Activated T-helper 1 cell treated with anti-CD3 and anti-CD28 coated beads, Interleukin-12 subunit alpha, Interleukin-12 subunit beta, Interleukin-2, Interleukin-4 antibody, amounts not matched to agents 30 ng/mL and 10 ng/mL and 1 ng/mL, durations not matched to agents 14 hours and 24 hours and 36 hours (primary cell): ENCODE measurements at regions of chr17 and their contacts with region 1.

Region 1: GRCh38 chr17:37791447-37792399 is 46.9 kb upstream of the HNF1B start:
- DNase-seq: peak; percentile 43
- H3K4me3 Mint-ChIP-seq: no peak overlapping the region
- H3K27ac Mint-ChIP-seq: no peak overlapping the region
- H3K4me1 Mint-ChIP-seq: no peaks in the 10 kb centered on the region
- H3K27me3 Mint-ChIP-seq: peaks cover 15% of the 10 kb centered on the region

Region 2: DNA sequence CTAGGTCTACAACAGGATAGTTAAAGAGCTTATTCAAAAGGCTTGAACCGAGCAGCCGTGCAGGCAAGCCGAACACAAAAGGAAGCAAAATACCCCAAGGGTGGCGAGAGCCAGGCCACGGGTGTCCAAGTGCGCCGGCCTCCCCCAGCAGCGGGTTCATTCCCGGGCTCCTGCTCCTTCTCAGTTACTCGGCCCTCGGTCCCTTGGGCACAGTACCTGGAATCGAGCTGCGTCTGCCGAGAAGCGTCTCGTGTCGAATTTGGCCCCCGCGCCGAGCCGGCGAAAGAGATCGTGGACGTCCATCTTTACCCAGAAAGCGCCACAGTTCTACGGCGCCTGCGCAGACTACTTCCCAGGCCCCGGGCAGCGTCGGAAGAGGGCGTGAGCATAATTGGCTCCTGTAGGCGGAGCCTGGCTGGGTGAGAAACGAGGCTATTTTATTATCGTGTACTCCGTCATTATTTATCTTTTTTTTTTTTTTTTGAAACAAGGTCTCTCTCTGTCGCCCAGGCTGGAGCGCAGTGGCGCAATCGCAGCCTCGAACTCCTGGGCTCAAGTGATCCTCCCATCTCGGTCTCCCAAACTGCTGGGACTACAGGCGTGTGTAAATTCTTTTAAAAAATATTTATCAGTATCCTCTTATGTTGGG is 148.5 kb before region 1 on chr17 and contains the start of gene DDX52:
- intact Hi-C with region 1: loop called (anchors 1 kb)
- DNase-seq: peak; percentile 83
- H3K4me3 Mint-ChIP-seq: peak within 1 kb of the TSS; percentile 96
- H3K27ac Mint-ChIP-seq: peak within 1 kb of the TSS; percentile 81
- H3K4me1 Mint-ChIP-seq: peaks cover 33% of the 10 kb centered on the region
- H3K27me3 Mint-ChIP-seq: peaks cover 36% of the 10 kb centered on the region
- total RNA-seq, gene DDX52: 48.7 and 55.0 TPM in 2 replicates

Region 3: DNA sequence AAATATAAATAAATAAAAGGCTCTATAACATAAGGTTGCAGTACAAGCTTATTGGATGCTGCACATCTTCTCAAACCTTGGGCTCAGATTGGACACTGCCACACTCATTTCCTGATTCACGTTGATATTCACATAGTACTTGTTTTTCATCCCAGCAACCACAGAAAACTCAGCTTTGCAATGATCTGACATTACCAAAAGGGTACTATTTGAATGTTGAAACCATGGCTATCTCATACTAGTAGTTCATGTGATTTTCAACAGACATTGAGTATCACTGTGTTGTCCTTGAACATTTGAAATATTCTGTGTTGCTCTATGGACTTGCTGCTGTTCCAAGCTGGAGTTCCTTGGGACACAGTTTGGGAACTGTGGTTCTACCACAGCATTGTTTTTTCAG is 134.5 kb before region 1 on chr17:
- intact Hi-C with region 1: no loop called
- DNase-seq: no peak
- H3K4me3 Mint-ChIP-seq: no peak overlapping the region
- H3K27ac Mint-ChIP-seq: no peak overlapping the region
- H3K4me1 Mint-ChIP-seq: peaks cover 6% of the 10 kb centered on the region
- H3K27me3 Mint-ChIP-seq: peaks cover 39% of the 10 kb centered on the region

Region 4: DNA sequence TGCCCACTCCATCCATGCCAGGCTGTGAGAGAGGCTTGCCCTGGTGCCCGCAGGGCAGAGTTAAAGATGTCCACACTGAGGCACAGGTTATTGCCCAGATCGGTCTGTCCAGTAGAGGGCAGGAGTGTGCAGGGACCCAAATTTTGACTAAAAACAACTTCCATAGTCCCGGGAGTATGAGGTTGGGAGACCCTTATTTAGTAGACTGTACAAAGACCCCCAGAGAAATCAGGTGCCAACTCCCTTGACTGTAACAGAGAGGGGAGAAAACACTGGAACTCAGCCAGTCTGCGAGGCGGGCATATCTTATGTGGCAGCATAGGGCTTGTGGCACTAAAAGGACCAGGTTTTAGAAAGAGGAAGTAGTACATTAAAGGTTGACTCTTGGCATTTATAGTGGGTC is 90.2 kb before region 1 on chr17:
- intact Hi-C with region 1: loop called (anchors 1 kb)
- DNase-seq: peak; percentile 35
- H3K4me3 Mint-ChIP-seq: peak overlapping the region; percentile 45
- H3K27ac Mint-ChIP-seq: no peak overlapping the region
- H3K4me1 Mint-ChIP-seq: peaks cover 59% of the 10 kb centered on the region
- H3K27me3 Mint-ChIP-seq: peaks cover 26% of the 10 kb centered on the region

Region 5: DNA sequence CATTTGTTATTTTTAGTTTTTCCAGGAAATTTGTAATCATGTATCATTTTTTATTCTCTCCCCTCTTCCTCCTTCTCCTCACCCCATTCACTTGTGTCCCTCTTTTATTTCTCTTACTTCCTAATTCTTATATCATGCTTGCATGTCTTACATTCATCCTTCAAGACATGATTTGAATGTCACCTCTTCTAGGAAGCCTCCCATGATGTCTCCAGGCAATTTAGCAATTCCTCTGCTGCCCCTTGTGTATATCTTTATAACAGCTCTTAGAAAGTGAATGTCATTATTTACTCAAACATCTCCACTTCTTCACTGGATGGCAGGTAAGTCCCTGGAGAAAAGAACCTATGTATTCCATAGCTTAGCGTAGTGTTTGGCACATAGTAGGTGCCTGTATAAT is 54.6 kb before region 1 on chr17:
- intact Hi-C with region 1: no loop called
- DNase-seq: no peak
- H3K4me3 Mint-ChIP-seq: no peak overlapping the region
- H3K27ac Mint-ChIP-seq: no peak overlapping the region
- H3K4me1 Mint-ChIP-seq: no peaks in the 10 kb centered on the region
- H3K27me3 Mint-ChIP-seq: peaks cover 55% of the 10 kb centered on the region

Region 6: DNA sequence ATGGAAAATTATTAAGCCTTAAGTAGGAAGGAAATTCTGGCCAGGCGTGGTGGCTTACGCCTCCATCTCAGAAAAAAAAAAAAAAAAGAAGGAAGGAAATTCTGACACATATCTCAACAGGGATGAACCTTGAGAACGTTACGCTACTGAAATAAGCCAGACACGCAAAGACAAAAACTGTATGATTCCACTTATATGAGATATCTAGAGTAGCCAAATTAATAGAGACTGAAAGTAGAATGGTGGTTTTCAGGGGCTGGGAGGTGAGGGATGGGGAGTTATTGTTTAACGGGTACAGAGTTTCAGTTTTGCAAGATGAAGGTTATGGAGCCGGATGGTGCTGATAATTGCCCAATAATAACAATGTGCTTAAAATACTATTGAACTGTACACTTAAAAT is 30.7 kb before region 1 on chr17:
- intact Hi-C with region 1: loop called (anchors 2 kb)
- DNase-seq: no peak
- H3K4me3 Mint-ChIP-seq: peak overlapping the region; percentile 43
- H3K27ac Mint-ChIP-seq: peak overlapping the region; percentile 79
- H3K4me1 Mint-ChIP-seq: peaks cover 50% of the 10 kb centered on the region
- H3K27me3 Mint-ChIP-seq: peaks cover 25% of the 10 kb centered on the region

Region 7: GRCh38 chr17:37844158-37844976 is 52.6 kb after region 1 on chr17:
- intact Hi-C with region 1: loop called (anchors 2 kb)
- DNase-seq: peak; percentile 51
- H3K4me3 Mint-ChIP-seq: no peak overlapping the region
- H3K27ac Mint-ChIP-seq: no peak overlapping the region
- H3K4me1 Mint-ChIP-seq: peaks cover 49% of the 10 kb centered on the region
- H3K27me3 Mint-ChIP-seq: peaks cover 9% of the 10 kb centered on the region